Sigmoid colon (tissue), 7 donors: ENCODE measurements at regions of chr10 and their contacts with region 1.

Region 1: DNA sequence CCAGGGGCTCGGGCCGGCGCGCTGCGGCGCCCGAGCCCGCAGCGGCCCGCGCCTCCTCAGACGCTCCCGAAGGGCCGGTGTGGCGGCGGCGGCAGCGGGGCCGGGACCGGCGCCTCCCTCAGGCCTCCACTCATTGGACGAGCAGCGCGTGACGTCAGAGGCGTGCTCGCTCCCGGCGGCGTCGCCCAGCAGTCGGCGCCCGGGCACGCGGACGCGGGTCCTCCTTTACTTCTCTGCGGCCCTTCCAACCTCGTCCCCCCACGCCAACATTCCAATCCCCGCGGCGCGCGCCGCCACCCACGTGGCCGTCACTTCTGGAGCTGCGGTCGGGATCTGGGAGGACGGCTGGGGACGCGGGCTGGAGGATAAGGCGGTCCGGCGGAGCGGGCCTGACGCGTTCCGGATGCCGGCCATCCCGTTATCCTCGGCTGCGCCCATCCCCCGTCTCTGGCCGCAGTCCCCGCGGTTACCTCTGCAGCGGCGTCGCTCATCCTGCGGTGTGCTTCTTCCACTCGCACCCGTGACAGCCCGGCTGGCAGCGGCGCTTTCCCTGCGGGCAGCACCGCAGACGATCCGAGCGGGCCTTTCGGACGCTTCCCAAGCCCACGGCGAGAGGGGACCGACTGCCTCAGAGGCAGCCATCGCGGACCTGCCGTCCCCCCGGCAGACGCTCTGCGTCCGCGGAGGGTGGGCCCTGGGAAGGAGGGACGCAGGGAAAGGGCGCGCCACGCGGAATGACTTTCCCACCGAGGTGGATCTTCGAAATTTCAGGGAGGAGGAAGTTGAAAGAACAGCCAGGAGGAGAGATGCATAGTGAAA is at the start of gene PDZD8:
- DNase-seq: peak; percentile 97
- H3K4me3 ChIP-seq: peak within 1 kb of the TSS; percentile 69 to 94 (median 85)
- H3K27ac ChIP-seq: peak within 1 kb of the TSS; percentile 89 to 99 (median 96)
- H3K4me1 ChIP-seq: peaks cover 0 to 51% (median 27%) of the 10 kb centered on the region in 4 donors
- H3K27me3 ChIP-seq: no peaks in the 10 kb centered on the region
- CTCF ChIP-seq: no peak
- EP300 ChIP-seq: peak in 1 of 4 donors; percentile 10
- POLR2A ChIP-seq: peak; percentile 80 to 81
- total RNA-seq, gene PDZD8: 25.2 to 34.3 (median 30.7) TPM

Region 2: DNA sequence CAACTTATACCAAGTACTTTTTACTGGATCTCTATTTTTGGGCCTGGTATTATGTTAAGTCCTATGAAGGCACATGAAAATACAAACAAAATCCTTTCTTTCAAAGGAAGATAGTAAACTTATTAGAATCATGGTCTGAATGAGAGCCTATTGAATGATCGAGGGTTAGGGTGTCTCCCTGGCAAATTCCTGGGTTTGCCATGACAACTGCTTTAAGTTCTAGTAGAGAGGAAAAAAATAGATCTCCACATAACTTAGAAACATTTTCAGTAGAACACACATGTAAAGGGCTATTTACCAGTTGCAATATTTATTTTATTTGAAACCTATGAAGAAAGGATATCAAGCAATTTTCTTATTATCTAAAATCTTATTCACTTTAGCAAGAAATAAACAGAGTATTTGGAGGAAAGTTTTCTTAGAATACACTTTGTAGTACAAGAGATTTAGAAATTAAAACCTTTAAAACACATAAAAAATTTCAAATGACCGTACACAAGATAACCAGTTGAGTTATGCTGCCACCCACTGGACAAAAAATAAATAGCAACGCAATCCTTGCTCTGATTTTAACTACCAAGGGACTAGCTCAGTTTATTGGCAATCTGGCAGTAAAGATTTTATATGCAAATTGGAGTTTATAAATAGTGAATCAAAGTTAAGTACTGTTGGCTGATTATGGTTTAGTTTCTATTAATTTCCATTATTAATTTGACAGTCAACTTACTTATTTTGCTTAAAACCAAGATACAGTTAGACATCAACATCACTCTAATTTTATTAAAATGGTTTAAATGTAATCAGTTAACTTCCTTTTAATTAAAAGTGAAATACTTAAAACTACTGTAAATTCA is 1345.3 kb after region 1 on chr10:
- intact Hi-C with region 1: loop called (anchors 10 kb)
- DNase-seq: no peak
- H3K4me3 ChIP-seq: no peak overlapping the region
- H3K27ac ChIP-seq: no peak overlapping the region
- H3K4me1 ChIP-seq: peaks cover 0 to 26% (median 21%) of the 10 kb centered on the region in 4 donors
- H3K27me3 ChIP-seq: no peaks in the 10 kb centered on the region
- CTCF ChIP-seq: peak; percentile 63 to 87 (median 83)
- EP300 ChIP-seq: no peak
- POLR2A ChIP-seq: no peak